A673 (cell line): ENCODE measurements at regions of chr17 and their contacts with region 1.

Region 1: GRCh38 chr17:34673995-34674870 is 94.9 kb downstream of the TMEM132E start:
- DNase-seq: no peak
- H3K4me3 ChIP-seq: no peak overlapping the region
- H3K27ac ChIP-seq: no peak overlapping the region
- H3K4me1 ChIP-seq: no peaks in the 10 kb centered on the region
- H3K27me3 ChIP-seq: no peaks in the 10 kb centered on the region
- CTCF ChIP-seq: no peak

Region 2: DNA sequence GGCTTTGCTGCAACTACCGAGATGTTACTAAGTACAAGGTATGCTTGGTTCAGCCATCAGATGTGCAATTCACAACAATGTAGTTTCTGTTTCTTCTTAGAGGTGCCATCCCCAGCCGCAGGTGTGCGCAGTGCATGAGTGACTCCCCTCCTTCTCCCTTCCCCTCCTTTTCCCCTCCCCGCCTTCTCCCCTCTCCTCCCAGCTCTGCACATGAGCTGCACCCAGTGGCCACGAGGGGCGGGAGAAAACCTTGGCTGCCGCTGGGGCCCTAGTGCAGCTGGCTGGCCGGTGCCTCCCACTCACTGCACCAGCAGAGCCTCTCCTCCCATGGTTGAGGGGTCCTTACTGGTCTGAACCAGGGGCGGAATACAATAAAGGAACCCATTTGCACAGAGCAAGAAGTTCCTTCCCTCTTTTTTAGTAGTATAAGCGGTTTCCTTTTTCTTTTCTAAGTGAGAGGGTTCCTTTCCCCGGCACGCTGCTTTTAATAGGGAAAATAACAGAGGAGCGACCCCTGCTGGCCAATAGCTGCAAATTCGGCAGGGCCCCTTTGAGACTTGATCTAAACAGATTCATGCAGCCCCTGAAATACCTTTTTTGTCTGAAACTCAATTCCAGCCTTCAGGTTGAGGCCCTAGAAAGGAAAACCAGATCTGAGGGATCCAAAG is 1334.9 kb after region 1 on chr17:
- CTCF ChIA-PET with region 1: no interaction called
- POLR2A ChIA-PET with region 1: no interaction called
- intact Hi-C with region 1: loop called (anchors 10 kb)
- DNase-seq: peak; percentile 0
- H3K4me3 ChIP-seq: no peak overlapping the region
- H3K27ac ChIP-seq: no peak overlapping the region
- H3K4me1 ChIP-seq: no peaks in the 10 kb centered on the region
- H3K27me3 ChIP-seq: no peaks in the 10 kb centered on the region
- CTCF ChIP-seq: peak; percentile 40